ENCODE measurements at regions of chr4 and their contacts with region 1.

Region 1: DNA sequence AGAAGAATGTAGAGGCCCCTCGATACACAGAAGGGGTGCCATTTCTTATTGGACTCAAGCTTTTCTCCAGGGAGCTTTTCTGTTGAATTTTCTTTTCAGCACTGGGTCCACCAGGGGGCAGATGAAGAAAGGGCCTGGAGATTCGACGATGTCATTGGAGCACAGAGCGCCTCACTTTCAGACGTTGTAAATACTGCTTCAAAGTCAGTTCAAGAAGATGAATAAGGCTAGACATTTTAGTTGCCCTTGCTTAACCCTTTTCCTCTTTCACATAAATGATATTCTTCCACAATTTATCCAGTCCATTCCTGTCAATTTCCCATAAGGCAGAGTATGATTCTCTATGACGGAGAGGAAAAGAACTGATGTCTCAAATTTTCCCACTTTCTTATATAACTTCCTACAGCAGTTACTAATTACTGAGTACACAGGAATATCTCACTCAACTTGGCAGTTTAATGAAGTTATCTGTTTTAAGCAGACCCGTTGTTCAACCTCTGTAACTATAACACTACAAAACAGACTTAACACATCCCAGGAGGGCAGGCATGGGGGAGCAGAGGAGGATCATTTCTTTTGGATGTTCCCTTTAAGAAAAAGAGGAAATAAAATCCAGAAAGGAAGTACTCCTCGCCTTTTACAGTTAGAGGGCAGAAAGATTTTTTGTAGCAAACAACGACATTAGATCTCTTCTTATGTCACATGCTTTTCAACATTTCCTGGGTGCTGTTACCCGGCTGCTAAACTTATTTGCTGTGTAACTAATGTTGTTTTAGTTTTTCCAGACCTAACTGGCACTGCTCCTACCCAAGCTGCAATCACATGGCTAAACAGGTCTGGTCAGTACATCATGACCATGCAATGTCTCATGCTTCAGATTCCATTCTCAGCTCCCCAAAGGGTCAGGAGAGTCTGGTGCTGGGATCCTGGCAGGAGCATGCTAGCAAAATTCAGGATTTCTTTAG is 12.2 kb upstream of the CENPU start:
- DNase-seq: peak; percentile 79
- ATAC-seq: peak; percentile 90
- H3K4me3 ChIP-seq: no peak overlapping the region
- H3K4me3 Mint-ChIP-seq: peak overlapping the region; percentile 55
- H3K27ac ChIP-seq: no peak overlapping the region
- H3K27ac Mint-ChIP-seq: peak overlapping the region; percentile 53
- H3K4me1 ChIP-seq: peaks cover 8 to 12% of the 10 kb centered on the region in 2 donors
- H3K4me1 Mint-ChIP-seq: peaks cover 11% of the 10 kb centered on the region
- H3K27me3 ChIP-seq: no peaks in the 10 kb centered on the region
- H3K27me3 Mint-ChIP-seq: no peaks in the 10 kb centered on the region
- CTCF ChIP-seq: peak; percentile 82

Region 2: GRCh38 chr4:184907216-184907615 is 161.1 kb after region 1 on chr4:
- CTCF ChIA-PET with region 1: interaction called, 54 read pairs
- POLR2A ChIA-PET with region 1: no interaction called
- intact Hi-C with region 1: loop called (anchors 1 kb)
- DNase-seq: peak; percentile 30
- ATAC-seq: peak; percentile 80
- H3K4me3 ChIP-seq: no peak overlapping the region
- H3K4me3 Mint-ChIP-seq: no peak overlapping the region
- H3K27ac ChIP-seq: no peak overlapping the region
- H3K27ac Mint-ChIP-seq: no peak overlapping the region
- H3K4me1 ChIP-seq: no peaks in the 10 kb centered on the region
- H3K4me1 Mint-ChIP-seq: peaks cover 4% of the 10 kb centered on the region
- H3K27me3 ChIP-seq: no peaks in the 10 kb centered on the region
- H3K27me3 Mint-ChIP-seq: peaks cover 1% of the 10 kb centered on the region
- CTCF ChIP-seq: peak; percentile 38

Region 3: DNA sequence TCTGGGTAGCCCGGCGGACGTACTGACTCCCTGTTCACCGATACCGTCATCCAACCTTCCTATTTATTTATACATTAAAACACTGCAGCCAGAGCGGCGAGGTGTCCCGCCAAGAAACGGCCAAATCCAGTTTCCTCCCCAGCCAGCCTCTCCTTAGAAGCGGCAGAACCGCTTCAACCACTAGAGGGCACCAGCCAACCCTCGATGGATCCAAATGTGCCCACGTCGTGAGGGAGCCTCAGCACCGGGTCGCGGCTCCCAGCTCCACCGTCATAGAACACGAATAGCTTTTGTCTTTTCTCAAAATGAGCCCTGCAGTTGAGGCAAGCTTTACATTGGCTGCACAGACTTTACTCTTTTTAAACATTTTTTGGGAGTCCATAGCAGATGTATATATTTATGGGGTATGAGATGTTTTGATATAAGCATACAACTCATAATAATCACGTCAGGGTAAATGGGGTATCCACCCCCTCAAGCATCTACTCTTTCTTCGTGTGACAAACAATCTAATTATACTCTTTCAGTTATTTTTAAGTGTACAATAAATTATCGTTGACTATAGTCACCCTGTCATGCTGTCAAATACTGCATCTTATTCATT is 259.2 kb after region 1 on chr4:
- CTCF ChIA-PET with region 1: interaction called, 17 read pairs
- POLR2A ChIA-PET with region 1: no interaction called
- intact Hi-C with region 1: loop called (anchors 2 kb)
- DNase-seq: peak; percentile 83
- ATAC-seq: peak; percentile 93
- H3K4me3 ChIP-seq: no peak overlapping the region
- H3K4me3 Mint-ChIP-seq: peak overlapping the region; percentile 50
- H3K27ac ChIP-seq: no peak overlapping the region
- H3K27ac Mint-ChIP-seq: no peak overlapping the region
- H3K4me1 ChIP-seq: peaks cover 7 to 10% of the 10 kb centered on the region in 2 donors
- H3K4me1 Mint-ChIP-seq: peaks cover 6% of the 10 kb centered on the region
- H3K27me3 ChIP-seq: peaks cover 0 to 32% (median 9%) of the 10 kb centered on the region in 4 experiments
- H3K27me3 Mint-ChIP-seq: peaks cover 56% of the 10 kb centered on the region
- CTCF ChIP-seq: peak; percentile 97

Region 4: DNA sequence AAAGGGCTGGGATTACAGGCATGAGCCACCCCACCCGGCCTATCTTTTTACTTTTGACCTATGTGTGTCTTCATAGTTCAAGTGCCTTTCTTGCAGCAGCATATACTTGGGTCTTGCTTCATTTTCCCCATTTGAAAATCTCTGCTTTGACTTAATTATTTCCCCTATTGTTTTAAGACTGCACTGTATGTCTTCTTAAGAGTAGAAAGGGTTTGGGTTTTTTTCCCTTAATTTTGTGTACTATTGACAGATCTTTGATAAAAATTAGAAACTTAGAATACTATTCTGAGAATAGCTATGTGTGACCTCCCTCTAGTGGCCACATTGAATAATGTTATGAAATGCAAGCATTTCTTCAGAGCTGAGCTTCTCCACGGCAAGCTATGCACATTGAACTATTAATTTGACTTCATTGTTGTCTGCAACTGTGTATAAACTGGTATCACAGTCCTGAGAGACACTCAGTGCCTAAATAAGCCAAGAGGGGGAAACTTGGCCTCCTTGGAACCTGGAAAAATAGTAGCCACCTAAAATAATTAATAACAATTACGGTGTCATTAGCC is 388.3 kb after region 1 on chr4:
- CTCF ChIA-PET with region 1: interaction called, 11 read pairs
- POLR2A ChIA-PET with region 1: no interaction called
- intact Hi-C with region 1: loop called (anchors 5 kb)
- DNase-seq: peak; percentile 66
- ATAC-seq: peak; percentile 69
- H3K4me3 ChIP-seq: no peak overlapping the region
- H3K4me3 Mint-ChIP-seq: no peak overlapping the region
- H3K27ac ChIP-seq: no peak overlapping the region
- H3K27ac Mint-ChIP-seq: no peak overlapping the region
- H3K4me1 ChIP-seq: no peaks in the 10 kb centered on the region
- H3K4me1 Mint-ChIP-seq: no peaks in the 10 kb centered on the region
- H3K27me3 ChIP-seq: peaks cover 0 to 6% (median 3%) of the 10 kb centered on the region in 4 experiments
- H3K27me3 Mint-ChIP-seq: peaks cover 24% of the 10 kb centered on the region
- CTCF ChIP-seq: peak; percentile 94

Measured in B cell (primary cell).